ENCODE measurements at regions of chr2 and their contacts with region 1.

Region 1: DNA sequence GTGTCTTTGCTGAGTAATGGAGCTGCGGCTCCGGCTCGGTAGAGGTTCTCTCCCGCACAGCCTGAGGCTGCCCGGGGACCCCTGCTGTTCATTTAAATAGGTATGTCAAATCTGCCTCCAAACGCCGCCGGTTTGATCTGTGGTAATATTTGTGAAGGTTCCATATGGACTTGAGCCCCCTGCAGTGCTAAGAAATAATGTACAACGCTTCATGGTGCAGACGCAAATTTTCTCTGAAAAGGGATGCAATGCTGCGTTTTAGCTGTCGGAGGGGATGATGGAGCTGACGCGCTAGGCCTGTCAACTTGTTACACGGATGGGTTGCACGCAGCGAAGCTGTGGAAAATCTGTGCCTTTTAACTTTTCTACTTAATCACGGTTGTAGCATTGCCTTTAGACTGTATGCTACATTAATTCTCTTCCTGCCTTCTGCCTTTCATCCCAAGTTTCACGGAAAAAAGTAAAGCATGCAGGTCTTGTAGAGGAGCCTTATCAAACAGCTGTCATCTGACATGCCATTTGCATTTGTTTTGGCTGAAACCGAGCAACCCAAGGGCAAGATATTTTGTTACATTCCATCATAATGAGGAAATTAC is 43.2 kb downstream of the MRPS9 start:
- DNase-seq: no peak
- ATAC-seq: no peak

Region 2: GRCh38 chr2:105034170-105034569 is 46.9 kb before region 1 on chr2:
- intact Hi-C with region 1: loop called (anchors 5 kb)
- DNase-seq: no peak
- ATAC-seq: no peak

Region 3: GRCh38 chr2:105454801-105455485 is 373.8 kb after region 1 on chr2:
- intact Hi-C with region 1: no loop called
- DNase-seq: no peak
- ATAC-seq: peak; percentile 47

Measured in left ventricle myocardium superior (tissue), 1 donor.